PC-3 (cell line): ENCODE measurements at regions of chr2 and their contacts with region 1.

Region 1: GRCh38 chr2:135258193-135258592 is 206.1 kb downstream of the RAB3GAP1 start:
- DNase-seq: peak; percentile 60
- ATAC-seq: peak; percentile 82
- H3K4me3 ChIP-seq: no peak overlapping the region
- H3K27ac ChIP-seq: peak overlapping the region; percentile 85
- H3K4me1 ChIP-seq: peaks cover 19% of the 10 kb centered on the region
- H3K27me3 ChIP-seq: no peaks in the 10 kb centered on the region
- CTCF ChIP-seq: peak; percentile 56

Region 2: DNA sequence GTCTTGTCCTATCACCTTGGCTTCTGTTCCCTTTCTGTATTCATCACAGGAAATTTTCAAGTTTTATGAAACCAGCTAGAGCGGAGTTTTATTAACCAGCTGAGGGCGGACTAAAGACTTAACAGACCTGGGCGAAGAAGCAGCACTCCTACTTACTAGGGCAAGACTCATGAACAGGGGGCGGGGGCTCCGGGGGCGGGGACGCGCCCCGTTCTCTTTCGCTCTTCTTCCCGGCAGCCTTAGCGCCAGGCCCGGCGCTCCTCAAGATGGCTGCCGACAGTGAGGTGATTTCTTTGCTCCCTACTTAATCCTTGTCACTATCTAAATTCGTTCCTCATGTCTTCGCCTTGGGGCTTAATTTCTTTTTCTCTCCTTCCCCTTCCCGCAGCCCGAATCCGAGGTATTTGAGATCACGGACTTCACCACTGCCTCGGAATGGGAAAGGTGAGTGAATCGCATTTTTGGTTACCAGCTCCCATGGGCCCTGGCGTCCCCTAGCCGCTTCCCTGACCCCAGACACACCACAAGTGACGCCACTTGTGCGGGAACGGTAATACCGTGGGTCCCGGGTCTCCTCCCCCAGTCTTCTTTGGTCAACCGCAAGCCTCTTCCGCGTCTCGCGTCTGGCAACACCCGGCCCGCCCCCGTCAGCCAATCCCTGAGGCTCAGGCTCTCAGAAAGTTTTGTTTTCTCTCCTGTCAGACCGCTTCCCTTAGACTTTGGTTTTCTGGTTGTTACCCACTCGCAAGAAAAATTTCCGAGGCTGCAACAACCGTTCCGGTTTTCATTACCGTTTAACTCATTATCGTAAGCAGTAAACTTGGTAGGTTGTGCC is 205.9 kb before region 1 on chr2 and contains the start of gene RAB3GAP1:
- CTCF ChIA-PET with region 1: no interaction called
- POLR2A ChIA-PET with region 1: no interaction called
- intact Hi-C with region 1: loop called (anchors 5 kb)
- DNase-seq: peak; percentile 82
- ATAC-seq: peak; percentile 94
- H3K4me3 ChIP-seq: peak within 1 kb of the TSS; percentile 92
- H3K27ac ChIP-seq: peak within 1 kb of the TSS; percentile 67
- H3K4me1 ChIP-seq: peaks cover 23% of the 10 kb centered on the region
- H3K27me3 ChIP-seq: no peaks in the 10 kb centered on the region
- CTCF ChIP-seq: 0 out of 2 replicates have a peak, but pooled peaks have one; percentile 12
- total RNA-seq, gene RAB3GAP1: 35.8 and 41.1 TPM in 2 replicates

Region 3: GRCh38 chr2:135099802-135100483 is 158.2 kb before region 1 on chr2:
- CTCF ChIA-PET with region 1: no interaction called
- POLR2A ChIA-PET with region 1: no interaction called
- intact Hi-C with region 1: no loop called
- DNase-seq: no peak
- ATAC-seq: no peak; the same call in 1 of the 2 replicates
- H3K4me3 ChIP-seq: no peak overlapping the region
- H3K27ac ChIP-seq: no peak overlapping the region
- H3K4me1 ChIP-seq: peaks cover 13% of the 10 kb centered on the region
- H3K27me3 ChIP-seq: no peaks in the 10 kb centered on the region
- CTCF ChIP-seq: no peak

Region 4: DNA sequence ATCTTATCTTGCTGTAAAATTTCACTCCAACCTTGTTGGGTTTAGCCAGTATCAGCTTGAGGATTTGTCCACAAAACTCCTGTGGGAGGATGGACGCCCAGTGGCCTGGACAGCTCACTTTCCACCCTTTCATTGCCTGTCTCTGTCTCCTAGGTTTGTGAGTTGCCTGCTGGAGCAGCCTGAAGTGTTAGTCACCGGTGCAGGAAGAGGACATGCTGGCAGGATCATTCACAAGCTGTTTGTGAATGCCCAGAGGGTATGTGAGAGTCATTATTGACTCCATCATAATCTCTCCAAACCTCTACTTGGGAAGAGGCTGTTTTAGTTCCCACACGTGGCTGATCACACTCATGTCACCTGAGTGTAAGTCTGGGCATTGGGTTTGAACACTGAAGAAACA is 93.8 kb before region 1 on chr2:
- CTCF ChIA-PET with region 1: no interaction called
- POLR2A ChIA-PET with region 1: no interaction called
- intact Hi-C with region 1: loop called (anchors 1 kb)
- DNase-seq: peak; percentile 96
- ATAC-seq: peak; percentile 97
- H3K4me3 ChIP-seq: no peak overlapping the region
- H3K27ac ChIP-seq: peak overlapping the region; percentile 88
- H3K4me1 ChIP-seq: peaks cover 36% of the 10 kb centered on the region
- H3K27me3 ChIP-seq: no peaks in the 10 kb centered on the region
- CTCF ChIP-seq: no peak

Region 5: DNA sequence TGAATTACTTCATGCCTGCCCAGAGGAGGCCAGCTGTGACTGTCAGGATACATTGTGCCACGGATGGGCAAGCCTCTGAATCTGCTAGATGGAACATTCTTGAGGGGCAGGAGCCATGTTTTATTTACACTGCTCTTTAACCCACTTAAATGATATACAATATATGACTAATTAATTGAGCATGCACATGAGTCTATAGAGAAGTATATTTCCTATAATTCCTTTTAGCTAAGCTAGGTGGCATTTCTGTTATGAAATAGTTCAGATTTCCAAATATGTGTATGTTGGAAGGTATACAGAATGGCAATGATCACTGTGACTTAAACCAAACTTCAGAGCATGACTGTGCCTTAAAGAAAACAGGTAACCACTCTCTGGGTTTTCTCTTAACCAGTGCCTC is 74.4 kb before region 1 on chr2:
- CTCF ChIA-PET with region 1: no interaction called
- POLR2A ChIA-PET with region 1: no interaction called
- intact Hi-C with region 1: loop called (anchors 5 kb)
- DNase-seq: peak; percentile 52
- ATAC-seq: peak; percentile 49
- H3K4me3 ChIP-seq: no peak overlapping the region
- H3K27ac ChIP-seq: no peak overlapping the region
- H3K4me1 ChIP-seq: peaks cover 7% of the 10 kb centered on the region; the same call in 1 of the 2 replicates
- H3K27me3 ChIP-seq: no peaks in the 10 kb centered on the region
- CTCF ChIP-seq: no peak

Region 6: GRCh38 chr2:135424839-135425238 is 166.6 kb after region 1 on chr2:
- CTCF ChIA-PET with region 1: no interaction called
- POLR2A ChIA-PET with region 1: no interaction called
- intact Hi-C with region 1: no loop called
- DNase-seq: peak; percentile 45
- ATAC-seq: 0 out of 2 replicates have a peak, but pooled peaks have one; percentile 54
- H3K4me3 ChIP-seq: no peak overlapping the region
- H3K27ac ChIP-seq: no peak overlapping the region
- H3K4me1 ChIP-seq: no peaks in the 10 kb centered on the region
- H3K27me3 ChIP-seq: no peaks in the 10 kb centered on the region
- CTCF ChIP-seq: peak; percentile 71